PC-9 (cell line): ENCODE measurements at regions of chr11 and their contacts with region 1.

Region 1: GRCh38 chr11:46188045-46188444 is 66.8 kb upstream of the PHF21A start:
- DNase-seq: no peak
- H3K4me3 ChIP-seq: no peak overlapping the region
- H3K27ac ChIP-seq: no peak overlapping the region
- H3K4me1 ChIP-seq: peaks cover 22% of the 10 kb centered on the region
- H3K27me3 ChIP-seq: no peaks in the 10 kb centered on the region
- CTCF ChIP-seq: no peak

Region 2: GRCh38 chr11:46039990-46040389 is 148.1 kb before region 1 on chr11:
- CTCF ChIA-PET with region 1: no interaction called
- POLR2A ChIA-PET with region 1: no interaction called
- intact Hi-C with region 1: no loop called
- DNase-seq: no peak
- H3K4me3 ChIP-seq: no peak overlapping the region
- H3K27ac ChIP-seq: no peak overlapping the region
- H3K4me1 ChIP-seq: no peaks in the 10 kb centered on the region
- H3K27me3 ChIP-seq: no peaks in the 10 kb centered on the region
- CTCF ChIP-seq: no peak

Region 3: DNA sequence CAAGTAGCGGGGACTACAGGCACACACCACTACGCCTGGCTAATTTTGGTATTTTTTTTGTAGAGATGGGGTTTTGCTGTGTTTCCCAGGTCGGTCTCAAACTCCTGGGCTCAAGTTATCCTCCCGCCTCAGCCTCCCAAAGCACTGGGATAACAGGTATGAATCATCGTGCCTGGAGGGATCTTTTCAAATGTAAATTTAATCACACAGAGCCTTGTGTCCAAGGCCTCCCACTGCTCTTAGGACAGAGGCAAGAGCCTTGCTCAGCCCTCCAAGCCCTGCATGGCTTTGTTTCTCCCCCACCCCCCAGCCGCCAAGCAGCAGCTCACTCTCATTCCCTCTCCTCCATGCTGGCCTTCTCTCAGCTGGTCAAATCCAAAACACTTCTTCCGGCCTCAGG is 14.1 kb after region 1 on chr11:
- CTCF ChIA-PET with region 1: no interaction called
- POLR2A ChIA-PET with region 1: interaction called, 21 read pairs
- intact Hi-C with region 1: no loop called
- DNase-seq: no peak
- H3K4me3 ChIP-seq: no peak overlapping the region
- H3K27ac ChIP-seq: no peak overlapping the region
- H3K4me1 ChIP-seq: no peaks in the 10 kb centered on the region
- H3K27me3 ChIP-seq: no peaks in the 10 kb centered on the region
- CTCF ChIP-seq: no peak

Region 4: GRCh38 chr11:46212720-46213119 is 24.7 kb after region 1 on chr11:
- CTCF ChIA-PET with region 1: no interaction called
- POLR2A ChIA-PET with region 1: no interaction called
- intact Hi-C with region 1: no loop called
- DNase-seq: no peak
- H3K4me3 ChIP-seq: no peak overlapping the region
- H3K27ac ChIP-seq: no peak overlapping the region
- H3K4me1 ChIP-seq: peaks cover 10% of the 10 kb centered on the region
- H3K27me3 ChIP-seq: no peaks in the 10 kb centered on the region
- CTCF ChIP-seq: no peak